Left ventricle myocardium inferior (tissue), 1 donor: ENCODE measurements at regions of chr3 and their contacts with region 1.

Region 1: DNA sequence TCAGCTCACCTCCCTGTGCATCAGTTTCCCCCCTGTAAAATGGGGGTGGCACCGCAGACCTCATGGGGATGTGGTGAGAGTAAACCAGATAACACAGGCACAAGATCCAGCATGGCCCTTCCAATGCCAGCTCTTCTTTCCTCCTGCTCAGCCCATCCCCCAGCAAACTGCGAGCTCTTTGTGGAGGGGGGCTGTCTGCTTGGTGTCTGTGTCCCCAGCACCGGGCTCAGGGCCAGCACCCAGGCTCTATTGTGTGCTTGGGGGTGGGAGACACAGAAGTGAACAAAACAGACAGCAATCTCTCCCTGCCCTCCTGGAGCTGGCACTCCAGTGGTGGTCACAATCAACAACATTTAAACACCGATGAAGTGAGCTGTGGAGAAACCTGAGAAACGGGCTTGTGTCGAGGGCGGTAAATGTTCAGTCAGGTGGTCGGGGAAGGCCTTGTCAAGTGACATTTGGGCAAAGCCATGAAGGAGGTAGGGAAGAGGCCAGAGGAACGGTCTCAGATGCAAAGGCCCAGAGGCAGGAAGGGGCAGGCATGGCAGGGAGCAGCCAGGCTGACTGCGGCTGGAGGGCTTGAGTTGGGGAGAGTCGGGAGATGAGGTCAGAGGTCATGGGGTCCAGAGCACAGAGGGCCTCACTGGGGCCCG is 28.4 kb downstream of the GRIP2 start:
- DNase-seq: no peak
- H3K4me3 ChIP-seq: no peak overlapping the region
- H3K27ac ChIP-seq: no peak overlapping the region
- H3K4me1 ChIP-seq: peaks cover 17% of the 10 kb centered on the region
- H3K27me3 ChIP-seq: no peaks in the 10 kb centered on the region
- CTCF ChIP-seq: no peak

Region 2: GRCh38 chr3:14548321-14548729 is 36.6 kb after region 1 on chr3:
- intact Hi-C with region 1: loop called (anchors 2 kb)
- DNase-seq: peak; percentile 73
- H3K4me3 ChIP-seq: no peak overlapping the region
- H3K27ac ChIP-seq: no peak overlapping the region
- H3K4me1 ChIP-seq: peaks cover 14% of the 10 kb centered on the region
- H3K27me3 ChIP-seq: peaks cover 7% of the 10 kb centered on the region
- CTCF ChIP-seq: peak; percentile 88